ENCODE measurements at regions of chr11 and their contacts with region 1.

Region 1: GRCh38 chr11:118804094-118804493 is 13.1 kb upstream of the DDX6 start:
- DNase-seq: no peak
- H3K4me3 ChIP-seq: no peak overlapping the region
- H3K27ac ChIP-seq: no peak overlapping the region
- H3K4me1 ChIP-seq: no peaks in the 10 kb centered on the region
- H3K27me3 ChIP-seq: no peaks in the 10 kb centered on the region; the same call in 1 of the 2 replicates
- CTCF ChIP-seq: no peak
- EP300 ChIP-seq: no peak
- RAD21 ChIP-seq: no peak

Region 2: DNA sequence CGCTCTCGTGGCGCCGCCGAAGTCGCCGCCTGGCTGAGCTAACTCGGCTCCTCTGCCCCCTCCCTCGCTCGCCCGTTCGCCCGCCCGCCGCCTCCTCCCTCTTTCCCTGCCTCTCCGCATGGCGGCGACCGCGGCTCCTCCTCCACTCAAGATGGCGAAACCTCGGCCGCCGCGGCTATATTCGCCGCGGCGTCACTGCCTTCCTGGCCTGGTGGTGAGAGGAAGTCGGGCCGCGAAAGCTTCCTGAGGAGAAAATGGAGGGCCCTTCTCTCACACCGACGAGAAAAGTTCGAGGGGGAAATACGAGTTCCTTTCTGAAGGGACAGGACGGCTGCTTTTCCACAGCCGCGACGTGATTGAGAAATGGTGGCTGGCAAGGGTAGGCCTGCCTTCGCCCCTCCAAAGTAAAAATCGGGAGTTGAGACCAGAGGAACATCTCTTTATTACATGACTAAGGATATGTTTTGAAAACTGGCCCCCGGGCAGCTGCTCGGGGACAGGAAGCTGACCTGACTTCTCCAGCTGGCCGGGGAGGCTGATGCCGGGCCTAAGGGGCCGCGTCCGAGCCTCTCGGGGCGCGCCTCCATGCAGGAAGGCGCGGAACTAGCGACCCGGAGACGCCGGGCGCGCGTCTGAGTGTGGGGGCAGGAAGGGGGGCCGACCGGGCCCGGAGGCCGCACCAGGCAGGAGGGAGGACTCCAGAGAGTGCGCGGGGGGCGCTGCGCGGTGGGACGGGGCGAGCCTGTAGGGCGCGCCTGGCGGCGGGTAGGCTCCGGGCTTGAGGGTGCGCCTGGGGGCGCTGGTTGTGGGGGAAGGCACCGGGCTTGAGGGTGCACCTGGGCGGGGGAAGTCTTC is 12.8 kb before region 1 on chr11 and contains the start of gene DDX6:
- CTCF ChIA-PET with region 1: interaction called, 11 read pairs
- POLR2A ChIA-PET with region 1: interaction called, 3 read pairs
- DNase-seq: peak; percentile 94
- H3K4me3 ChIP-seq: peak within 1 kb of the TSS; percentile 71 to 90
- H3K27ac ChIP-seq: peak within 1 kb of the TSS; percentile 96 to 97
- H3K4me1 ChIP-seq: peaks cover 4 to 19% of the 10 kb centered on the region in 2 experiments; a peak in 2 of 4 replicates
- H3K27me3 ChIP-seq: no peaks in the 10 kb centered on the region
- CTCF ChIP-seq: peak; percentile 23
- EP300 ChIP-seq: peak in 1 of 2 experiments; percentile 29; a peak in 1 of 4 replicates
- RAD21 ChIP-seq: 0 out of 2 replicates have a peak, but pooled peaks have one; percentile 18
- polyA plus RNA-seq, gene DDX6: 7.9 and 13.0 TPM in 2 replicates

Measured in SK-N-SH (cell line).